ENCODE measurements at regions of chr1 and their contacts with region 1.

Region 1: DNA sequence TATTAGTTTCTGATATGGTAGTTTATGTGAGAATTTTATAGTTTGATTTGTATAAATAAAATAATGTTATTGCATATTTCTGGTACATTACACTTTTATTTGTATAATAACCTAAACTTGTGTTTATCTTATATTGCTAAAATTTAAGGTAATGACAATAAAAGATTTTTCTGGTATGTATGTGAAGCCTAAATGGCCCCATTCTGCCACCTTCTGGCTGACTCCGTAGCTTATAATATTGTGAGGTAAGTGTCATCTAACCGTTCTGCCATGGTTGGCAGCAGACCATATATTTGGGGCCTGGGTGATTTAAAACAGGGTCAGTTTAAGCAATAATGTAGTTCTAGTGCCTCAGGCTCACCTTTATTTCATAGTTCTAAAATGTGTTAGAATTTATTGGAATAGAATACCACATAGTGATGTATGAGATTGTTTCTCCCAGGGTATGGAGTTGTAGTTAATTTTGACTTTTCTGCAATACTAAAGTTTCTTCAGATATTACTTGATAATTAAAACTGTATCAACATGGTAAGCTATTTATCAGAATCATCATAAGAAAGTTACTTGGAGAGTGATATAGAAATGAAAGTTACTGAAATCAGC is 21.2 kb upstream of the PRKACB start:
- DNase-seq: peak; percentile 84
- H3K4me3 Mint-ChIP-seq: no peak overlapping the region
- H3K27ac Mint-ChIP-seq: no peak overlapping the region
- H3K4me1 Mint-ChIP-seq: no peaks in the 10 kb centered on the region
- H3K27me3 Mint-ChIP-seq: peaks cover 2% of the 10 kb centered on the region

Region 2: GRCh38 chr1:83905315-83905907 is 217.5 kb before region 1 on chr1:
- intact Hi-C with region 1: loop called (anchors 1 kb)
- DNase-seq: peak; percentile 69
- H3K4me3 Mint-ChIP-seq: no peak overlapping the region
- H3K27ac Mint-ChIP-seq: no peak overlapping the region
- H3K4me1 Mint-ChIP-seq: no peaks in the 10 kb centered on the region
- H3K27me3 Mint-ChIP-seq: peaks cover 19% of the 10 kb centered on the region

Region 3: DNA sequence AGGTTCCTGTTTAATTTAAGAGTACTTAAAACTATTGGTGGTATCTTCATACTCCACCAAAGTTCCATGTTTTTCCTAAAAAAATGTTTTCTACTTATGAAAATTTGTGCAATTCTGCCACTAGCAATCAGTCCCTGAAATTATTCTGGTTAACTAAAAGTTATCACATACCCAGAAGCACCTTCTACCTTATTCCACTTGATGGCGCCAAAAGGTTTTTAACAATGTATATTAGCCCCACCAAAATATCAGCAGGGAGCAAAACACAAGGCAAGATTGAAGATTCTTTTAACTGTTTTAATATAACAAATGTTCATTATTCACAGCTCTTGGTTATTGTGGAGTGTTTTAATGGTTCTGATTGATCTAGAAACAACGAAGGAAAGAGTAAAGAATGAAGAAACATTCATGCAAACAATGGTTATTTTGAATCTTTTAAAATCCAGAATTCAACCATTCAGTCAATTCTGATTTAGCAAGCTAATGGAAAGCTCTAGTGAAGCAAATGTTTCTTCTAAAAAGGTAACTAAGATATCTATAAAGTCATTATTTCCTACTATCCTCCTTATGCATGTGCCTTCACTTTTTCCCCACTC is 191.1 kb before region 1 on chr1:
- intact Hi-C with region 1: loop called (anchors 1 kb)
- DNase-seq: peak; percentile 76
- H3K4me3 Mint-ChIP-seq: no peak overlapping the region
- H3K27ac Mint-ChIP-seq: no peak overlapping the region
- H3K4me1 Mint-ChIP-seq: no peaks in the 10 kb centered on the region
- H3K27me3 Mint-ChIP-seq: peaks cover 27% of the 10 kb centered on the region

Region 4: GRCh38 chr1:84143796-84144565 is 21.1 kb after region 1 on chr1 and contains the start of gene PRKACB:
- intact Hi-C with region 1: no loop called
- DNase-seq: peak; percentile 82
- H3K4me3 Mint-ChIP-seq: peak within 1 kb of the TSS; percentile 85
- H3K27ac Mint-ChIP-seq: peak within 1 kb of the TSS; percentile 98
- H3K4me1 Mint-ChIP-seq: peaks cover 23% of the 10 kb centered on the region
- H3K27me3 Mint-ChIP-seq: no peaks in the 10 kb centered on the region
- total RNA-seq, gene PRKACB: 19.1 and 19.3 TPM in 2 replicates

Region 5: GRCh38 chr1:84319662-84320061 is 196.8 kb after region 1 on chr1:
- intact Hi-C with region 1: no loop called
- DNase-seq: no peak
- H3K4me3 Mint-ChIP-seq: no peak overlapping the region
- H3K27ac Mint-ChIP-seq: no peak overlapping the region
- H3K4me1 Mint-ChIP-seq: peaks cover 5% of the 10 kb centered on the region
- H3K27me3 Mint-ChIP-seq: peaks cover 8% of the 10 kb centered on the region

Region 6: GRCh38 chr1:84344286-84344685 is 221.4 kb after region 1 on chr1:
- intact Hi-C with region 1: no loop called
- DNase-seq: no peak
- H3K4me3 Mint-ChIP-seq: no peak overlapping the region
- H3K27ac Mint-ChIP-seq: no peak overlapping the region
- H3K4me1 Mint-ChIP-seq: no peaks in the 10 kb centered on the region
- H3K27me3 Mint-ChIP-seq: peaks cover 4% of the 10 kb centered on the region

Region 7: GRCh38 chr1:84377480-84378095 is 254.7 kb after region 1 on chr1:
- intact Hi-C with region 1: no loop called
- DNase-seq: no peak
- H3K4me3 Mint-ChIP-seq: no peak overlapping the region
- H3K27ac Mint-ChIP-seq: no peak overlapping the region
- H3K4me1 Mint-ChIP-seq: no peaks in the 10 kb centered on the region
- H3K27me3 Mint-ChIP-seq: no peaks in the 10 kb centered on the region